Pancreas (tissue), 10 donors: ENCODE measurements at regions of chr11 and their contacts with region 1.

Region 1: GRCh38 chr11:66309475-66309874 is 7.4 kb downstream of the CD248 start:
- DNase-seq: no peak
- ATAC-seq: no peak
- H3K4me3 ChIP-seq: no peak overlapping the region
- H3K27ac ChIP-seq: no peak overlapping the region
- H3K4me1 ChIP-seq: no peaks in the 10 kb centered on the region
- H3K27me3 ChIP-seq: no peaks in the 10 kb centered on the region
- CTCF ChIP-seq: no peak

Region 2: DNA sequence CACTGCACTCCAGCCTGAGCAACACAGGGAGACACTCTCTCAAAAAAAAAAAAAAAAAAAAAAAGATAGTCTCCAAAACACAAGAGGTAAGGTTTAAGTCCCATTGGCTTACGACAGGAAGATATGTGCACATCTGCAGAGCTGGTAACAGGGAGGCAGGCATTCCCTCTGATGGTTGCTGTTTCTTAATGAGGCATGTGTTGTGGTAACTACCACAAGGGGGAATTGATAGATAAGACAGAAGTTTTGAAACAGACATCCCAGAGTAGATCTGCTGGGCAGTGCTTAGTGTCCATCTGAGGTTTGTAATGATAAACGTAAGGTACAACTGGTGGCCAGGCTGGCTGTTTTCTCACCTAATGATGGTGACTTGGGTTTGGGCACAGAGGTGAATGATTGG is 312.2 kb before region 1 on chr11:
- intact Hi-C with region 1: no loop called
- DNase-seq: no peak
- ATAC-seq: no peak
- H3K4me3 ChIP-seq: no peak overlapping the region
- H3K27ac ChIP-seq: no peak overlapping the region
- H3K4me1 ChIP-seq: peaks cover 0 to 9% (median 0%) of the 10 kb centered on the region in 3 donors
- H3K27me3 ChIP-seq: no peaks in the 10 kb centered on the region
- CTCF ChIP-seq: no peak

Region 3: DNA sequence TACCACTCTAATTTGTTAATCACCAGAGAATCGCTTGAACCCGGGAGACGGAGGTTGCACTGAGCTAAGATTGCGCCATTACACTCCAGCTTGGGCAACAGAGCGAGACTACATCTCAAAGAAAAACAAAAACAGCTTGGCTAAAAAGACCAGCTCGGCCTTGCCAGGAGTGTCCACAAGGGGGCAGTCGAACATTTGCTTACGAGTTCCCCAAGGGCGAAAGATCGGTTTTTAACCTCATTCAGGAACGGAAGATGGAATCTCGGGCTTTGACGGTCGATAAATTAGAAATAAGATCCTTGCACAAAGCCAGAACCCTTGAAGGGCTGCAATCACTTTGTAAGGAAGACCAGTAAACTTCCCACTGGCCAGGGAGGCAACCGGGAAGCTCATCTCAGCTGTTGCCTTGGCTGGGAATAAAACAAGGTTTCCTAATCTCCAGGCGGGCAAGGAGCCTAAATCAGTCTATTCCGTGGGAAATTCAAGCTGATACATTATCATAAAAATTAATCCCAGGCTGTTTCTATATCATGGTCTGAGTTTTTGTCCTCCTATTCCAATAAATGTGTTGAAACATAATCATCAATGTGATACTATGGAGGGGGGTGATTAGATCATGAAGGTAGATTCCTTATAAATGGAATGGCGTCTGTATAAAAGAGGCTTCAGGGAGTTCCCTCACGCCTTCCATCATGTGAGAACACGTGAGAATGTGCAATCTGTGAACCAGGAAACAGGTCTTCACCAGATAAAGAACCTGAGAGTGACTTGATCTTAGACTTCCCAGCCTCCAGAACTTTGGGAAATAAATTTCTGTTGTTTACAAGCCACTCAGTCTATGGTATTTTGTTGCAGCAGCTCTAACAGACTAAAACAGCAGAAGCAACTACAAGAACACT is 76.9 kb after region 1 on chr11:
- intact Hi-C with region 1: loop called in 1 of 3 experiments (anchors 5 kb)
- DNase-seq: peak; percentile 71 to 94 (median 86)
- ATAC-seq: peak; percentile 81 to 92 (median 90)
- H3K4me3 ChIP-seq: peak overlapping the region in 2 of 4 donors; percentile 19 to 21
- H3K27ac ChIP-seq: peak overlapping the region in 1 of 4 donors; percentile 62
- H3K4me1 ChIP-seq: no peaks in the 10 kb centered on the region
- H3K27me3 ChIP-seq: no peaks in the 10 kb centered on the region
- CTCF ChIP-seq: peak; percentile 86 to 96 (median 92)